Activated CD4-positive, alpha-beta T cell treated with anti-CD3 and anti-CD28 coated beads for 36 hours (primary cell): ENCODE measurements at regions of chr7 and their contacts with region 1.

Region 1: GRCh38 chr7:100081535-100082102 is at the start of gene ZNF3:
- DNase-seq: peak; percentile 99
- ATAC-seq: peak; percentile 83
- H3K4me3 Mint-ChIP-seq: peak within 1 kb of the TSS; percentile 87
- H3K27ac Mint-ChIP-seq: peak within 1 kb of the TSS; percentile 87
- H3K4me1 Mint-ChIP-seq: peaks cover 25% of the 10 kb centered on the region
- H3K27me3 Mint-ChIP-seq: no peaks in the 10 kb centered on the region
- total RNA-seq, gene ZNF3: 18.8 to 19.0 TPM

Region 2: GRCh38 chr7:99616359-99617191 is 465.0 kb before region 1 on chr7 and contains the start of gene ZSCAN25:
- CTCF ChIA-PET with region 1: no interaction called
- POLR2A ChIA-PET with region 1: no interaction called
- intact Hi-C with region 1: loop called in 1 of 2 experiments (anchors 10 kb)
- DNase-seq: peak; percentile 92
- ATAC-seq: peak; percentile 93
- H3K4me3 Mint-ChIP-seq: peak within 1 kb of the TSS; percentile 92
- H3K27ac Mint-ChIP-seq: peak within 1 kb of the TSS; percentile 96
- H3K4me1 Mint-ChIP-seq: peaks cover 44% of the 10 kb centered on the region
- H3K27me3 Mint-ChIP-seq: no peaks in the 10 kb centered on the region
- total RNA-seq, gene ZSCAN25: 20.5 to 25.2 TPM

Region 3: GRCh38 chr7:99985444-99985843 is 96.2 kb before region 1 on chr7:
- CTCF ChIA-PET with region 1: no interaction called
- POLR2A ChIA-PET with region 1: no interaction called
- intact Hi-C with region 1: no loop called
- DNase-seq: no peak
- ATAC-seq: no peak
- H3K4me3 Mint-ChIP-seq: no peak overlapping the region
- H3K27ac Mint-ChIP-seq: no peak overlapping the region
- H3K4me1 Mint-ChIP-seq: peaks cover 7% of the 10 kb centered on the region
- H3K27me3 Mint-ChIP-seq: peaks cover 3% of the 10 kb centered on the region

Region 4: DNA sequence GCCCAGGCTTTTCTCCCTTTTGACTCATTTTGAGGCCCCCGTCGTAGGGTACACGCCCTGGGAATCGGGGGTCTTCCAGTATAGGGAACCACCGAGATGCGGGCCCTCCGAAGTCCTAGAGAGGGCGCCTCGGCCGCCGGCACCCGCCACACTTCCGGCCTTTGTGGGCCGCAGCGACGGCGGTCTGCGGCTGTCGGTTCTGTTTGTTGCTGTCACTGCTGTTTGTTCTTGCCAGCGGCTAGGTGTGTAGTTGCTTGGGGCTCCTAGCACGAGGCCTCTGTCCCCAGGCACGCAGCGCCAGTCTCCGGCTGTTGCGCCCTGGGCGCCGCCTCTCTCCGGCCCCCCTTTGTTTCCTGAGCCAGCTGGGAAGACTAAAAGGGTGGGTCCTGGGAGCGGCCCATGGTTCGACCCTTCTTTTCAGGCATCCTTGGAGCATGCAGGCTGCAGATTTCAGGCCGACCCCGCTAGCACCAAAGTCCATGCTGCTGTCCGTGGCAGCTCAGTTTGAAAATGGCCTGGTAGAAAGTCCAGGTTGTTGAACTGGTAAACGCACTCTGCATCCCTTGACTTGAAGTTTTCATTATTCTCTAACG is 84.0 kb before region 1 on chr7:
- CTCF ChIA-PET with region 1: interaction called, 3 read pairs
- POLR2A ChIA-PET with region 1: no interaction called
- intact Hi-C with region 1: loop called (anchors 1 kb)
- DNase-seq: peak; percentile 81
- ATAC-seq: peak; percentile 87
- H3K4me3 Mint-ChIP-seq: peak overlapping the region; percentile 67
- H3K27ac Mint-ChIP-seq: peak overlapping the region; percentile 89
- H3K4me1 Mint-ChIP-seq: peaks cover 15% of the 10 kb centered on the region
- H3K27me3 Mint-ChIP-seq: peaks cover 1% of the 10 kb centered on the region

Region 5: DNA sequence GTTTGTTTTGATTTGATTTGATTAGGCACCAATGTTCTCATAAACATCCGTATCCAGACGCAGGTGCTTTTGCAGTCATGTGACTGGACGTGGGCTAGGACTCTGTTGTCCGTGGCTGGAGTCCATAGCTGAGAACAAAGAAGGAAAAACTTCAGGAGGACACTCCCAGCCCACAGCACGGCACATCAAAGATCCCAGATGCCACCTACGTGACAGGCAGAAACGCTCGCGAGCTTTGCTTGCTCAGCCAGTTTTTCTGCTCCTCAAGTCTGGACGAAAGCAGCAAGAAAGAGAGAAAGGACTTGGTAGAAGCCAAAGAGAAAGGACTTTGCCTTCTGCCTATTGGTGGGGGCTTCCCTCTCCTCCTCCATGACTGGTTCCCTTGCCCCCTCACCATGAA is 73.1 kb before region 1 on chr7:
- CTCF ChIA-PET with region 1: no interaction called
- POLR2A ChIA-PET with region 1: no interaction called
- intact Hi-C with region 1: no loop called
- DNase-seq: no peak
- ATAC-seq: no peak
- H3K4me3 Mint-ChIP-seq: no peak overlapping the region
- H3K27ac Mint-ChIP-seq: no peak overlapping the region
- H3K4me1 Mint-ChIP-seq: peaks cover 8% of the 10 kb centered on the region
- H3K27me3 Mint-ChIP-seq: no peaks in the 10 kb centered on the region

Region 6: GRCh38 chr7:100101016-100101862 is 19.6 kb after region 1 on chr7 and contains the starts of genes AP4M1 and MCM7:
- CTCF ChIA-PET with region 1: interaction called, 13 read pairs
- POLR2A ChIA-PET with region 1: interaction called, 5 read pairs
- intact Hi-C with region 1: loop called (anchors 1 to 2 kb)
- DNase-seq: peak; percentile 99
- ATAC-seq: peak; percentile 91
- H3K4me3 Mint-ChIP-seq: peak within 1 kb of the TSS; percentile 90
- H3K27ac Mint-ChIP-seq: peak within 1 kb of the TSS; percentile 94
- H3K4me1 Mint-ChIP-seq: peaks cover 41% of the 10 kb centered on the region
- H3K27me3 Mint-ChIP-seq: no peaks in the 10 kb centered on the region
- total RNA-seq, gene AP4M1: 8.8 to 10.4 TPM
- total RNA-seq, gene MCM7: 411 to 429 TPM

Region 7: GRCh38 chr7:100132697-100133151 is 51.1 kb after region 1 on chr7:
- CTCF ChIA-PET with region 1: interaction called, 4 read pairs
- POLR2A ChIA-PET with region 1: no interaction called
- intact Hi-C with region 1: loop called (anchors 1 to 5 kb)
- DNase-seq: peak; percentile 82
- ATAC-seq: peak; percentile 81
- H3K4me3 Mint-ChIP-seq: no peak overlapping the region
- H3K27ac Mint-ChIP-seq: no peak overlapping the region
- H3K4me1 Mint-ChIP-seq: peaks cover 10% of the 10 kb centered on the region
- H3K27me3 Mint-ChIP-seq: no peaks in the 10 kb centered on the region

Region 8: GRCh38 chr7:100545360-100546128 is 463.9 kb after region 1 on chr7:
- CTCF ChIA-PET with region 1: no interaction called
- POLR2A ChIA-PET with region 1: no interaction called
- intact Hi-C with region 1: loop called in 1 of 2 experiments (anchors 10 kb)
- DNase-seq: peak; percentile 82
- ATAC-seq: peak; percentile 78
- H3K4me3 Mint-ChIP-seq: peak overlapping the region; percentile 98
- H3K27ac Mint-ChIP-seq: peak overlapping the region; percentile 99
- H3K4me1 Mint-ChIP-seq: peaks cover 96% of the 10 kb centered on the region
- H3K27me3 Mint-ChIP-seq: no peaks in the 10 kb centered on the region